Mucosa of descending colon (tissue), 3 donors: ENCODE measurements at regions of chr19 and their contacts with region 1.

Region 1: GRCh38 chr19:3700221-3701032 is at the start of gene PIP5K1C:
- DNase-seq: peak; percentile 93 to 96 (median 95)
- ATAC-seq: peak; percentile 99
- H3K4me3 ChIP-seq: peak within 1 kb of the TSS; percentile 77
- H3K4me1 ChIP-seq: peaks cover 5% of the 10 kb centered on the region
- CTCF ChIP-seq: peak; percentile 86
- total RNA-seq, gene PIP5K1C: 23.1 to 95.2 (median 23.2) TPM

Region 2: DNA sequence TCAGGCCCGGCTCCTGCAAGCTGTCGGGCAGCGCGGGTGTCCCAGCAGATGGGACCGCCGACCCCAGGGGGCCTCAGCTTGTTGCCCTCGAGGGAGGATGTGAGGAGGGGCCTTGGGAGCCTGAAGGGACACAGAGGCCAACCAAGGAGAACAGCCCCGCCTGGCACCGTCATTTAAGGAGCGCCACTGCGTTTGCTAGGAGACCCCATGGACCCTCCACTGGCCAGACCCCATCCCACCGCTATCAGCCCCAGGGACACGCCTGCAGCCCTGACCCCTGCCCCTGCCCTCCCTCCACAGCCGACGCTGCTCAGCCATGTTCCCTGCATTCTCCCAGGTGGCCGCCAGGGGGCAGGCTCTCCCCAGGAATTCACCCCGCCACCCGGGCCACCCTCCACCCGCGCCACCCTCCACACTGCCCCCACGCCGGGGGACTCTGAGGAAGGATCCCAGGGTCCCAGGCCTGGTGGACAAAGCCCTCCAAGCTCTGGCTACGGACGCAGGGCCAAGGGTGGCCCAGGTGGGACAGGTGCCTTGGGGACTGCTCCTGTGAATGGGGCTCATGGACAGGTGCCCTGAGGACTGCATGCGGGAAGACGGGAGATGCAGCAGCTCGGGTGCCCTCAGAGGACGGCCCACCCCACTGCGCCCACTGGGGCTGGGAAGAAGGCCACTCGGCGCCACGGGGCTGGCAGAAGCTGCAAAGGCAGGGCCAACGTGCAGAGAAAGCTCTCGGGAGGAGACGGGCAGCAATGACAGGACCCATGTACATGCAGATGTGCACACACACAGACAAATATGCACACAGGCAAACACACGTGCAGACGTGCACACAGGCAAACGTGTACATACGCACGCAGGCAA is 34.5 kb before region 1 on chr19:
- intact Hi-C with region 1: loop called in 1 of 2 experiments (anchors 5 kb)
- DNase-seq: peak; percentile 73 to 82 (median 79)
- ATAC-seq: peak; percentile 82
- H3K4me3 ChIP-seq: no peak overlapping the region
- H3K4me1 ChIP-seq: peaks cover 5% of the 10 kb centered on the region
- CTCF ChIP-seq: peak; percentile 90

Region 3: GRCh38 chr19:3748965-3749364 is 48.5 kb after region 1 on chr19:
- intact Hi-C with region 1: no loop called
- DNase-seq: no peak
- ATAC-seq: peak; percentile 30
- H3K4me3 ChIP-seq: no peak overlapping the region
- H3K4me1 ChIP-seq: no peaks in the 10 kb centered on the region
- CTCF ChIP-seq: no peak

Region 4: GRCh38 chr19:3798137-3798536 is 97.7 kb after region 1 on chr19:
- intact Hi-C with region 1: no loop called
- DNase-seq: no peak
- ATAC-seq: peak; percentile 56
- H3K4me3 ChIP-seq: no peak overlapping the region
- H3K4me1 ChIP-seq: no peaks in the 10 kb centered on the region
- CTCF ChIP-seq: no peak

Region 5: DNA sequence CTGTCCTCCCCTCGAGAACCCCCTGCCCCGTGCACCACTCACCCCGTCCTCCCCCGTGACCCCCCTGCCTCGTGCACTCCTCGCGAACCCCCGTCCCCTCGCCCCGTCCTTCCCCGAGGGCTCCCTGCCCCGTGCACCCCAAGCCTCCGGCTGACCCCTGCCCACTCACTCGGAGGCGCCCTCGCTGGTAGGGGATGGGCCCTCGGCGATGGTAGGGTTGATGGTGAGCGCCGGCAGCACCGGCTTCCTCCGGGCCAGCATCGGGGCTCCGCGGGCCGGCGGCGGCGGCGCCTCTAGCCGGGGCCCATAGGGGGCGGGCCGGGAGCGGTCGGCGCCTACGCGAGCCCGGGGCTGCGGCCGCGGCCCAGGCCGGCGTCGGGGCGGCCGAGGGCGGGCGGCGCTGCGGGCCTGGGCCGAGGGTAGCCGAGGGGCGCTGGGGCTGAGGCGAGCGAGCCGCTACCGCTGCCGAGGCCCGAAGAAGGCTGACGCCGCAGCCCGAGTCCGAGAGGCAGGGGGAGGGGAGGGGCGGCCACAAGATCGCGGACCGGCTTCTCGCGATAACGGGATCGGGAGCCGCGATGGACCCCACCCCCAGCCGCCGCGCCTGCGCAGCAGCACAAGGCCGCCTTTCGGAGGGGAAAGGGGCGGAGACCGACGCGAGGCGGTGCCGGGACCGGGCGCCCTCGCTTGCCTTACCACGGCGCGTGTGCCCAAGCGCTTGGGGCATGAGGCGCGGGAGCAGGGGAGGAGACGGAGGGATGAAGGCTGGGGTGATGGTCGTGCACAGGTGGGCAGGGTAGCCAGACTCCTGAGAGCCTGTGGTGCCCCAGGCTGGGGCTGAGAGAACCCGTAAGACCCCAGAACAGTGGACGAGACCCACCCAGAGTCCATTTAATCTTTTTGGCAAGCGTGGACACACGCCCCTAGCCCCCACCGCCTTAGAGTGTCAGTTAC is 423.5 kb after region 1 on chr19 and contains the start of gene MAP2K2:
- intact Hi-C with region 1: no loop called
- DNase-seq: peak; percentile 95 to 98 (median 97)
- ATAC-seq: peak; percentile 96
- H3K4me3 ChIP-seq: peak within 1 kb of the TSS; percentile 84
- H3K4me1 ChIP-seq: peaks cover 20% of the 10 kb centered on the region
- CTCF ChIP-seq: no peak
- total RNA-seq, gene MAP2K2: 173 to 221 (median 192) TPM